SK-N-SH (cell line): ENCODE measurements at regions of chr16 and their contacts with region 1.

Region 1: DNA sequence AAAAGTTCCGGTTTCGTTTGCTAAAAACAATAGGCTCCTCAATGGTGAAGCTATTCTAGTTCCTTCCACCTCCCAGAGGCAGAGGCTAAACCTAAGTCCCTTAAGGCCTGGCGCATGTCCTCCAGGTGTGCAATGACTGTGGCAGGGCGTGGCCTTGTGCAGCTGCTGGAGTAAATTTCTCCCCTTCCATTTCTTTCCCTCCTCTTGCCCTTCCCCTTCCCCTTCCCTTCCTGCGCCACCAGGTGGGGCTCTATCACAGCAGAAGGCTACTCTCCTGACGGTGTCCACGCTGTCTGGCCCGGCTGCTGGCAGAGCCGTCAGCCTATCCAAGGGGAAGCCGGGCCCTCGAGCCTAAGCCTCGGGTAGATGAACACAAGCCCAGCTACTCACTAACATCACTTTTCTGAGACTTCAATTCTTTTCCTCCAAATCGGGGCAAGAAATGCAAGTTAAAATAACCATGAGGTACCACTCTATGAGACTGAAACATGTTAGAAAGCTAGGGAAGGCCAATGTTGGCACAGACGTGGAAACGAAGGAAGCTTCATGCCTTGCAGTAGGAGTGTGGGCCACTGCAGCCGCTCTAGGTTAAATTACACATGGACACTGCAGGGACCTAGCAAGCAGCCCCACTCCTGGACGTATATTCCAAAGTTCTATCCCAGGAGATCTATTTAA is 34.4 kb downstream of the C16orf78 start:
- DNase-seq: peak; percentile 88
- H3K4me3 ChIP-seq: no peak overlapping the region
- H3K27ac ChIP-seq: no peak overlapping the region
- H3K4me1 ChIP-seq: peaks cover 0 to 3% of the 10 kb centered on the region in 2 experiments; a peak in 1 of 4 replicates
- H3K27me3 ChIP-seq: no peaks in the 10 kb centered on the region
- CTCF ChIP-seq: peak; percentile 76
- EP300 ChIP-seq: no peak
- RAD21 ChIP-seq: peak; percentile 99

Region 2: GRCh38 chr16:49419006-49419405 is 11.0 kb after region 1 on chr16:
- CTCF ChIA-PET with region 1: interaction called, 25 read pairs
- POLR2A ChIA-PET with region 1: no interaction called
- DNase-seq: no peak
- H3K4me3 ChIP-seq: no peak overlapping the region
- H3K27ac ChIP-seq: no peak overlapping the region
- H3K4me1 ChIP-seq: no peaks in the 10 kb centered on the region; a peak in 1 of 4 replicates
- H3K27me3 ChIP-seq: no peaks in the 10 kb centered on the region
- CTCF ChIP-seq: no peak
- EP300 ChIP-seq: no peak
- RAD21 ChIP-seq: no peak

Region 3: DNA sequence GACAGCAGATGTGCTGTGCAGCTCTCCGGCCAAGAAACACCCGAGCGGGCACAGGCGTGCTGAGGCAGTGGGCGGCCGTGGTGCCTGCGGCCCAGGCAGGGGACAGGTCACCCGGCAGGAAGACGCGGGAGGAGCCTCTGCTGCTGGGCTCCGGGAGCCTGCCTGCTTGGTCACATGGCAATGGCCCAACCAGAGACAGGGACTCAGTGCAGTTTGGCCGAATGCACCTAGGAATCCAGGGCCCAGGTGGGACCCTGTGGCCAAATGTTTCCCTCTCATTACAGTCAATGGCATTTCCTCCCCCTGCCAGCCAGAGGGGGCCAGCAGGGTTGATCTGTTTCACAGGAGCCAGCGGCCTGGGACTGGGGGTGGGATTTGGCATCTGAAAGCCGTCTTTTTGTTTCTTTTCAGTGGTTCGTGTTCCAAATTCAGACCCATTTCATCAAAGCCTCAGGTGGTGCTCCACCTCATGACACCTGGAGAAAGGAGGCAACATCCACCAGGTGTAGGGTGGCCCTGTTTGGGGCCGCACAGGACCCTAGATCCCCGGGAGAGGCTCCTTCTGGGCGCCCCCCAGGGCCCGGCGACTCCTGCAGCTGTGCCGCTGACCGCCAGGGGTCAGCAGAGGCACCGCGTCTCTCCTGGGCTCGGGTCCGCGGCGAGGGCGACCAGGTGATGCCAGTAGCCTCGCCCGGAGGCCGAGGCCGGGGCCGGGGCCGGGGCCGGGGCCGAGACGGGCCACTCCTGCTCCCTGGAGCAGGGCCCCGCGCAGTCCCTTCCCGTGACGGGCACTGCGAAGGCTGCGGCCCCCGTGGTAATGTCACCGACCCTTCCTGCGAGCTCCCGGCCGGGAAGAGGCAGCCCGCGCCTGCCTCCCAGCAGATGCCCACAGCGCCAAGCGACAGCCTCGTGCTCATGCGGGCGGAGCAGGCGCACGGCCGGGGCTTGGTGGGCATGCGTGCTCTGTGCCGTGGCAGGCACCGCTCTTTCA is 84.1 kb after region 1 on chr16:
- CTCF ChIA-PET with region 1: interaction called, 12 read pairs
- POLR2A ChIA-PET with region 1: no interaction called
- DNase-seq: peak; percentile 94
- H3K4me3 ChIP-seq: peak overlapping the region in 1 of 2 experiments; percentile 26; a peak in 1 of 4 replicates
- H3K27ac ChIP-seq: no peak overlapping the region; a peak in 1 of 4 replicates
- H3K4me1 ChIP-seq: peaks cover 0 to 23% of the 10 kb centered on the region in 2 experiments; a peak in 1 of 4 replicates
- H3K27me3 ChIP-seq: no peaks in the 10 kb centered on the region
- CTCF ChIP-seq: peak; percentile 84
- EP300 ChIP-seq: no peak
- RAD21 ChIP-seq: peak; percentile 61

Region 4: GRCh38 chr16:49899991-49900695 is 492.1 kb after region 1 on chr16:
- CTCF ChIA-PET with region 1: interaction called, 13 read pairs
- POLR2A ChIA-PET with region 1: no interaction called
- DNase-seq: no peak
- H3K4me3 ChIP-seq: no peak overlapping the region
- H3K27ac ChIP-seq: no peak overlapping the region
- H3K4me1 ChIP-seq: no peaks in the 10 kb centered on the region
- H3K27me3 ChIP-seq: peaks cover 10% of the 10 kb centered on the region; the same call in 1 of the 2 replicates
- CTCF ChIP-seq: no peak
- EP300 ChIP-seq: no peak
- RAD21 ChIP-seq: no peak

Region 5: GRCh38 chr16:49932946-49933345 is 524.9 kb after region 1 on chr16:
- CTCF ChIA-PET with region 1: interaction called, 14 read pairs
- POLR2A ChIA-PET with region 1: no interaction called
- DNase-seq: no peak
- H3K4me3 ChIP-seq: no peak overlapping the region
- H3K27ac ChIP-seq: no peak overlapping the region
- H3K4me1 ChIP-seq: no peaks in the 10 kb centered on the region
- H3K27me3 ChIP-seq: no peaks in the 10 kb centered on the region; the same call in 1 of the 2 replicates
- CTCF ChIP-seq: no peak
- EP300 ChIP-seq: no peak
- RAD21 ChIP-seq: no peak